H1 (cell line): ENCODE measurements at regions of chr12 and their contacts with region 1.

Region 1: GRCh38 chr12:49687941-49688340 is 19.3 kb downstream of the FMNL3 start:
- DNase-seq: no peak
- H3K4me3 ChIP-seq: no peak overlapping the region
- H3K27ac ChIP-seq: no peak overlapping the region
- H3K4me1 ChIP-seq: peaks cover 0 to 7% (median 4%) of the 10 kb centered on the region in 4 experiments; a peak in 4 of 7 replicates
- H3K27me3 ChIP-seq: no peaks in the 10 kb centered on the region
- CTCF ChIP-seq: peak; percentile 68 to 78 (median 70)
- EP300 ChIP-seq: no peak
- POLR2A ChIP-seq: no peak
- RAD21 ChIP-seq: peak; percentile 32 to 52; a peak in 3 of 4 replicates

Region 2: GRCh38 chr12:49698619-49699545 is 10.9 kb after region 1 on chr12:
- CTCF ChIA-PET with region 1: interaction called, 71 read pairs
- POLR2A ChIA-PET with region 1: interaction called, 21 read pairs
- DNase-seq: peak; percentile 57 to 67
- H3K4me3 ChIP-seq: peak overlapping the region in 3 of 4 experiments; percentile 16 to 49 (median 32); a peak in 4 of 8 replicates
- H3K27ac ChIP-seq: peak overlapping the region; percentile 64; the same call in 1 of the 2 replicates
- H3K4me1 ChIP-seq: peaks cover 7 to 45% (median 22%) of the 10 kb centered on the region in 4 experiments
- H3K27me3 ChIP-seq: no peaks in the 10 kb centered on the region
- CTCF ChIP-seq: no peak
- EP300 ChIP-seq: no peak
- POLR2A ChIP-seq: peak in 1 of 2 experiments; percentile 63; a peak in 1 of 3 replicates
- RAD21 ChIP-seq: no peak

Region 3: GRCh38 chr12:49707128-49707811 is 19.3 kb after region 1 on chr12 and contains the start of gene FMNL3:
- CTCF ChIA-PET with region 1: interaction called, 71 read pairs
- POLR2A ChIA-PET with region 1: interaction called, 7 read pairs
- DNase-seq: peak; percentile 77 to 99
- H3K4me3 ChIP-seq: peak within 1 kb of the TSS; percentile 53 to 82 (median 75)
- H3K27ac ChIP-seq: no peak within 1 kb of the TSS
- H3K4me1 ChIP-seq: peaks cover 3 to 27% (median 8%) of the 10 kb centered on the region in 4 experiments
- H3K27me3 ChIP-seq: peaks cover 1 to 9% (median 6%) of the 10 kb centered on the region in 4 experiments
- CTCF ChIP-seq: peak; percentile 87 to 96 (median 88)
- EP300 ChIP-seq: no peak
- POLR2A ChIP-seq: peak in 1 of 2 experiments; percentile 45; a peak in 2 of 3 replicates
- RAD21 ChIP-seq: peak; percentile 92 to 98
- total RNA-seq, gene FMNL3: 27.6 and 29.0 TPM in 2 replicates

Region 4: GRCh38 chr12:49832836-49833421 is 145.0 kb after region 1 on chr12:
- CTCF ChIA-PET with region 1: no interaction called
- POLR2A ChIA-PET with region 1: no interaction called
- DNase-seq: no peak
- H3K4me3 ChIP-seq: no peak overlapping the region
- H3K27ac ChIP-seq: no peak overlapping the region
- H3K4me1 ChIP-seq: peaks cover 0 to 7% (median under 1%) of the 10 kb centered on the region in 4 experiments; a peak in 3 of 7 replicates
- H3K27me3 ChIP-seq: no peaks in the 10 kb centered on the region
- CTCF ChIP-seq: no peak
- EP300 ChIP-seq: no peak
- POLR2A ChIP-seq: no peak
- RAD21 ChIP-seq: no peak